Mammary epithelial cell (primary cell): ENCODE measurements at regions of chr10 and their contacts with region 1.

Region 1: DNA sequence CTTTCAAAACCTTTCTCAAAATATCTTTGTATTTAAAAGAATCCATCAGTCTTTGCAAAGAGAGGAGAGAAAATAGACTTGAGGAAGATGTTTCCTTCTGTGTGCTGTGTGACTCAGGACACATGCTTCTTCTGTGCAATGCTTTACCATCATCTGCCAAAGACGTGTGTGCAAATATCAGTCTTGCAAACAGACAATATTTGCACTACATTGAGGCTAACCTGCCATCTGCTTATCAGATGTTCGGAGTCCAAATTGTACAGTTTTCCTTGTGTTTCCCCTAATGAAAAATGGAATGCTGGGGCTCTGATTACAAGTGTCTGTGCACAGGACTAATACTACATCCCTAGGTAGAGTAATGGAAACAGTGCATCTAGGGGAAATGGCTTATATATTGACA is 353.1 kb upstream of the LRRTM3 start:
- DNase-seq: no peak
- H3K4me3 ChIP-seq: no peak overlapping the region
- H3K27ac ChIP-seq: no peak overlapping the region
- H3K4me1 ChIP-seq: no peaks in the 10 kb centered on the region
- H3K27me3 ChIP-seq: no peaks in the 10 kb centered on the region
- CTCF ChIP-seq: no peak

Region 2: DNA sequence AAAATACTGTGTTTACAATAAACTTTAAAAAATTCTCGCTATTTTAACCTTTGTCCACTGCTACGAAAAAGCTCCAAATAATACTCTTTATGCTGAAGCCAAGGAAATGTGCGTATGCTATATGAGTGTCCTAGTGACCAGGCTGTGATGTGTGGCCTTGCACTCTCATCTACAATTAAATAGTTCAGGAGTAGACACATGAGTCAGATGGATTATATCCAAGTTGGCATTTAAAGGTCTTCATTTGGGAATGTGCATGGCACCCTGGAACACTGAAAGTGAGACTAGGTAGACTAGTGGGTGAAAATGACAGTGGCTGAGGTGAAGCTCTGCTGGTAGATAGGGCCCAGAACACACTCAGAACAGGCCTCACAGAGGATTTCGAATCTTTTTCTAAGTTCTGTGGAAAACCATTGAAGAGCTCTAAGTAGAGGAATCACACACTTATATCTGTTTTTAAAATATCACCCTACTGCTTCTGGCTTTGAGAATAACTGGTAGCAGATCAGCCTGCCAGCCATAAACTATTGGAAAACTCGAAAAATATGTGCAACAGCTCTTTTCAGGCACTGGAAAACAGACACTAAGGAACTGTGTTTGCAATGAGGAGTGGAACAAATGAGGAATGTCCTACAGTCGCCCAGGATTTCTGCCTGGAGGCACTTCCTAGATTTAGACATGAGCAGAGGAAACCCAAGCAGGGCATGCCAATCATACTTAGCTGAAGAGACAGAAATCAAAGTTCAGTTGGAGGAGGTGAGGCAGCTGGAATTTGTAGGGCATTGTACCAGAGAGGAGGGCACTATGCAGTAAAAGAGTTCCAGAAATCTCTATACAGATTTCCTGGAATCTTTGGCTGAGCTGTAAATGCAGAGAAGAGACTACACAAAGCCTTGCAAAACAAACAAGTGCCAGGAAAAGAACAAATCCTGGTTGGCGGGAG is 250.7 kb before region 1 on chr10:
- CTCF ChIA-PET with region 1: interaction called, 44 read pairs
- dilution Hi-C with region 1: no loop called
- in situ Hi-C with region 1: no loop called
- intact Hi-C with region 1: no loop called
- DNase-seq: no peak
- H3K4me3 ChIP-seq: no peak overlapping the region
- H3K27ac ChIP-seq: no peak overlapping the region
- H3K4me1 ChIP-seq: no peaks in the 10 kb centered on the region
- H3K27me3 ChIP-seq: no peaks in the 10 kb centered on the region
- CTCF ChIP-seq: no peak